GM13977 (cell line): ENCODE measurements at regions of chr7 and their contacts with region 1.

Region 1: DNA sequence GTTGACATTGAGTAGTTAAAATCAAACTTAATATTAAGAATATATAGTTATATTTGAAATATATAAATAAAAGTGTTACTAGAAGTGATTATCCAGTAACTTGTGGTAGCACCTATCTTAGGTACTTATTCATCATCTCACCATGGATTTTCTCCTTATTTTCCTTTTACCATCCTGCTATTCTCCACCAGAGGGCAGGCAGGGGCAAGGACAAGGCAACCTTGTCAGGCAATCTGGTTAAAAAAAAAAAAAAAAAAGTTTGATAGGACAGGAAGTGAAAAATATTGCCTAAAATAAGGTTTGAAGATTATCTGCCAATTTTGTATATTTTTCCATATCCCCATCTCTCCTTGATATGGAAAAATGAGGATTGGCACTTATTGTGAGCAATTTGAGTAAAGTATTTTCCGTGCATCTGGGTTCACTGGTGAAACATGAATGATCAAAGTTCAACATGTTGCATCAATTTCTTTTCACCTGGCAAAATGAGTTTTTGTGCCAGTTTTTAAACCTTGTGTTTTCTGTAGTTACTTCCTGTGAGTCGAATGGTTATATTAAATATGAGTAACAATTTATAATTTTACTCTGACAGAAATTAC is 256.7 kb downstream of the AGMO start:
- DNase-seq: peak; percentile 4
- CTCF ChIP-seq: peak; percentile 63

Region 2: DNA sequence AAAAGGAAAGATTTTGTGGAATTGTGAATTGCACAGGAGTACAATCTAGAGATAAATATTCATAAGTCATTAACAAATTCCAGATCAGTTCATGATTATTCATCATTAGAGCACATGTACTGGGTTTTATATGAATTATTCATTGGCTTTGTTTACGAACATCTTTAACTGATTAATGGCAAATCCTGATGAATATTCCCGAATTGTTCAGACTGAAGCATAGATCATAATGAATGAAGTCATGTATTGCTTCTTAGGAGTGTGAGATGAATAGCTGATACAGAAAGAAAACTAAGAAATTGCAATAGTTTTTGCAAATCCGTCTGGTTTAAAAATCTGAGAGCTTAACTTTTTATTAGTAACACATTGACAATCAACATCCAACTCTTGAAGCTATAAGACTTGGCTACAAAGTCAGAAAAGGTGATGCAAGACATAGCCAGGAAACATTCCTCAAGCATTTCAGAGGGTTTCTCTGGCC is 218.9 kb before region 1 on chr7:
- in situ Hi-C with region 1: no loop called
- DNase-seq: no peak
- CTCF ChIP-seq: no peak

Region 3: DNA sequence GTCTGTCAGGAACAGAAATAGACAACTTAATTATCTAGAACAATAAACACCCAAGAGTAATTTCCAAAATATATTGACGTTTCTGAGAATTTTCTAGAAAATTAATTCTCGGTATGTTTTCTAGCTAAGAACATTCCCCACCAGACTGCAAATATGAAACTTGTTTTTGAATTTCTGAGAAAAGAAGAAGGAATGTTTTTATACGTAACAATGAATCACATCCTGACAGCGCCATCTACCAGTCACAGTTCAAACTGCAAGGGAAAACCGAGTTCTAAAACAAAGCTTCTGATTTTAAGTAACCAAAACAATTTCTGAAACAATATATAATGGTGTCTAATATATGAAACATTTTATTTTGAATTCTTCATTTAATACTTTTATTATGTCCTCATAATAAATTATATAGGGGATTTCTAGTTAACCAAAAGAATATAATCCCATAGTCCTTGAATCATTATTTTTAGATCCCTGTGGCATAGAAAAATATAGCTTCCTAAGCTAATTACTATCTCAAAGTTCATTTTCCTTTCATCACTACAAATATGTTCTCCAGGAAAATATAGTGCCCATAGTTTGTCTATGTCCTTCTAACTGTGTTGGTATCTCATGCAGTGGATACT is 415.9 kb after region 1 on chr7:
- in situ Hi-C with region 1: loop called (anchors 25 kb)
- DNase-seq: peak; percentile 2
- CTCF ChIP-seq: peak; percentile 85

Region 4: DNA sequence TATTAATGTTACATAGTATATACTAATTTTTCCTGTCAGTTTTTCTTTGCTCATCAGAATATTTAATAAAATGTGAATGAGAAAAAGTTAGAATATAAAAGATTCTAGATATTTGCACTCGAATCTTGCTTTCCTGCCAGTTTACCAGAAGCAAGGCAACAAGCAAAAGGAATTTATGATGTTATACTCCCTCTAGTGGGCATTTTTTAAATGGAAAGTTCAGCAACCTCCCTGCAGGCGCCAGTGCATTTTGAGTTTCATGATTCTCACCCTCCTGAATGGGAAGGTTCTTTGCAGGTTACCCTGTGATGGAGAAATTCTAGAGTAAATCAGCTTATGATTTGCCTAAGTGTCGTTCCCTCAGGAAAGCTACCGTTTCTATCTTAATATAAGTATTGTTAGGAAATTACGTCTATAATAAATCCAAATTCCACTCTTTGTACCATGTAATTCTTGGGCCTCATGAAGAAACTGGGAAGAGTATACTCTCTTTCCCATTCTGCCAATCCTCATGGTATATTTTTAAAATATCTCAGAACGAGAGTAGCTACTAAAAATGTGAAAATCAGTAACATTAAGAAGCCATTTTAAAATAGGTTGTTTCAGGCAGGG is 766.3 kb after region 1 on chr7:
- in situ Hi-C with region 1: loop called (anchors 25 kb)
- DNase-seq: peak; percentile 15
- CTCF ChIP-seq: peak; percentile 62